Gastrocnemius medialis (tissue), 4 donors: ENCODE measurements at regions of chr7 and their contacts with region 1.

Region 1: DNA sequence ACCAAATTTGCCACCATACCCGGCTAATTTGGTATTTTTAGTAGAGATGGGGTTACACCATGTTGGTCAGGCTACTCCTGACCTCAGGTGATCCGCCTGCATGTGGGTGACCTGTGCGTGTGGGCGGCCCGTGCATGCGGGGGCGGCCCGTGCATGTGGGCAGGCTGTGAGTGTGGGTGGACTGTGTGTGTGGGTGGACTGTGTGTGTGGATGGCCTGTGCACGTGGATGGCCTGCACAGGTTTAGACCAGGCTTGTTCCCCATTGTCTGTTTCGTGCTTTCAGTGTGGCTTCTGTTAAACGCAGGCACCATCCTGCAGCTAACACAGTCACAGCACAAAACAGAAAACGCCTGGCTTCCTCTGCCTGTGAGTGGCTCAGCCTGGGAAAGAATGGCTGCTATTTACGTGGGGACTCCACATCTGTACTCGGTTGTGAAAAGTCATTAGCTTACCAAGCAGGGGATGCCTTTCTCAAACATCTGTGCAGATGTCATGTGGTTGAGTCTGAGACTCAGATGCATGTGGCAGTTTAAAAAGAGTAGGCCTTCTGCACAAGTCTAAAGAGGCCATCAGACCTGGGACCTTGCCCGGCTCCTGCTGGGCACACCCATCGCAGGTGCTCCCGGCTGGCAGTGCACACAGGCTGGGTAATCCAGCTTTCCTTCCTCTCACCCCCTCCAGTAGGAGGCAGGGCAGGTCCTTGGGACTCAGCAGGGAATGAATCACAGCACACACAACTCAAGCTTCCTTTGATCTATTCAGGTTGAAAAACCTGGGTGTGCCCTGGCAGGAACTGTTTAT is 91.6 kb downstream of the COBL start:
- DNase-seq: peak; percentile 41 to 71
- ATAC-seq: peak; percentile 57 to 71
- H3K4me3 ChIP-seq: no peak overlapping the region
- H3K27ac ChIP-seq: peak overlapping the region in 2 of 4 donors; percentile 10 to 40
- H3K4me1 ChIP-seq: peaks cover 34 to 41% of the 10 kb centered on the region in 2 donors
- H3K27me3 ChIP-seq: no peaks in the 10 kb centered on the region
- CTCF ChIP-seq: peak; percentile 20 to 52 (median 46)
- POLR2A ChIP-seq: no peak

Region 2: GRCh38 chr7:51187941-51188340 is 37.1 kb before region 1 on chr7:
- in situ Hi-C with region 1: no loop called
- intact Hi-C with region 1: loop called (anchors 5 kb)
- DNase-seq: peak; percentile 38 to 63
- ATAC-seq: peak; percentile 67 to 69
- H3K4me3 ChIP-seq: no peak overlapping the region
- H3K27ac ChIP-seq: peak overlapping the region; percentile 41 to 67 (median 62)
- H3K4me1 ChIP-seq: peaks cover 8 to 12% of the 10 kb centered on the region in 2 donors
- H3K27me3 ChIP-seq: no peaks in the 10 kb centered on the region
- CTCF ChIP-seq: peak in 4 of 5 experiments; percentile 36 to 56 (median 45)
- POLR2A ChIP-seq: no peak

Region 3: GRCh38 chr7:51315393-51316261 is 90.6 kb after region 1 on chr7:
- in situ Hi-C with region 1: no loop called
- intact Hi-C with region 1: loop called (anchors 2 kb)
- DNase-seq: peak; percentile 26 to 48
- ATAC-seq: peak; percentile 58 to 61
- H3K4me3 ChIP-seq: peak overlapping the region; percentile 76 to 91 (median 82)
- H3K27ac ChIP-seq: peak overlapping the region; percentile 81 to 95 (median 92)
- H3K4me1 ChIP-seq: peaks cover 16 to 19% of the 10 kb centered on the region in 2 donors
- H3K27me3 ChIP-seq: no peaks in the 10 kb centered on the region
- CTCF ChIP-seq: no peak
- POLR2A ChIP-seq: peak; percentile 26 to 49

Region 4: GRCh38 chr7:51344406-51345138 is 119.6 kb after region 1 on chr7:
- in situ Hi-C with region 1: loop called in 2 of 4 experiments (anchors 5 to 10 kb)
- intact Hi-C with region 1: no loop called
- DNase-seq: no peak
- ATAC-seq: no peak
- H3K4me3 ChIP-seq: no peak overlapping the region
- H3K27ac ChIP-seq: no peak overlapping the region
- H3K4me1 ChIP-seq: peaks cover under 1 to 2% of the 10 kb centered on the region in 2 donors
- H3K27me3 ChIP-seq: no peaks in the 10 kb centered on the region
- CTCF ChIP-seq: no peak
- POLR2A ChIP-seq: no peak

Region 5: GRCh38 chr7:51350200-51350921 is 125.3 kb after region 1 on chr7:
- in situ Hi-C with region 1: loop called in 2 of 4 experiments (anchors 5 to 10 kb)
- intact Hi-C with region 1: loop called (anchors 5 kb)
- DNase-seq: peak; percentile 18 to 49
- ATAC-seq: peak; percentile 91 to 99
- H3K4me3 ChIP-seq: peak overlapping the region in 1 of 4 donors; percentile 2
- H3K27ac ChIP-seq: peak overlapping the region; percentile 41 to 67 (median 48)
- H3K4me1 ChIP-seq: peaks cover 12 to 13% of the 10 kb centered on the region in 2 donors
- H3K27me3 ChIP-seq: no peaks in the 10 kb centered on the region
- CTCF ChIP-seq: no peak
- POLR2A ChIP-seq: no peak

Region 6: DNA sequence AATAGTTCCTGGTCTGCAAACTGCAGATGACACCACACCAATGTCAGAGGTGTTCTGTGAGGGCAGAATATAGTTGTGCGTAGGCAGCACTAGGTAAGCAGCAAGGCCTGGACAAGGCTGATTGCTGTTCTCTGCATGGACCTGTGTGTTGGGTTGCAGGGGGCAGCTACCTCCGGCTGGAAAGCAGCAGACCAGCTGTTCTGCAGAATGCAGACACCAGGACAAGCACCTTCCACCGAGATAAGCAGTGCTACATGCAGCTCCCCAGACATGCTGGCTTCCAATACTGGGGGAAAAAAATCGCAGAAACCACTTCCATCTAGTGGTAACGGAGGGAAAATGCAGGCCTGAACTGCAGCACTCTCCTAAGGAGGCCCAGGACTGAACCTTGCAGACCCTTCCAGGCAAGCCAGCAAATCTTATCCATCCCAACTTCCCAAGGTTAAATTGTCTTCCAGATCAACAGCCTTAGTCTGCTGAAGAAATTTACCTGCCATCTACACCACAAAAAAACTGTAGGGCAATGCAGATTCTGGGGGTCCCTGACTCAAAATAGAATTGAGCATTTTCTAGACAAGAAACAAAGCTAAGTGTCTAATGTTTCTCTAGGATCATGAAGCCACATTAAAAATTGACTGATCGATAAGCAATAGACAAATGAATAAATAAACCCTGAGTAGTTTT is 142.1 kb after region 1 on chr7:
- in situ Hi-C with region 1: no loop called
- intact Hi-C with region 1: loop called (anchors 2 kb)
- DNase-seq: peak; percentile 9 to 29
- ATAC-seq: peak; percentile 89 to 96
- H3K4me3 ChIP-seq: no peak overlapping the region
- H3K27ac ChIP-seq: no peak overlapping the region
- H3K4me1 ChIP-seq: no peaks in the 10 kb centered on the region
- H3K27me3 ChIP-seq: no peaks in the 10 kb centered on the region
- CTCF ChIP-seq: peak; percentile 64 to 80 (median 75)
- POLR2A ChIP-seq: no peak